ENCODE measurements at regions of chr13 and their contacts with region 1.

Region 1: GRCh38 chr13:49443704-49444523 is at the starts of genes CAB39L and SETDB2:
- DNase-seq: peak; percentile 99 to 100
- H3K4me3 ChIP-seq: peak within 1 kb of the TSS; percentile 80
- CTCF ChIP-seq: no peak
- POLR2A ChIP-seq: no peak
- total RNA-seq, gene CAB39L: 14.9 to 31.1 (median 26.3) TPM
- total RNA-seq, gene SETDB2: 9.3 to 14.4 (median 9.9) TPM

Region 2: DNA sequence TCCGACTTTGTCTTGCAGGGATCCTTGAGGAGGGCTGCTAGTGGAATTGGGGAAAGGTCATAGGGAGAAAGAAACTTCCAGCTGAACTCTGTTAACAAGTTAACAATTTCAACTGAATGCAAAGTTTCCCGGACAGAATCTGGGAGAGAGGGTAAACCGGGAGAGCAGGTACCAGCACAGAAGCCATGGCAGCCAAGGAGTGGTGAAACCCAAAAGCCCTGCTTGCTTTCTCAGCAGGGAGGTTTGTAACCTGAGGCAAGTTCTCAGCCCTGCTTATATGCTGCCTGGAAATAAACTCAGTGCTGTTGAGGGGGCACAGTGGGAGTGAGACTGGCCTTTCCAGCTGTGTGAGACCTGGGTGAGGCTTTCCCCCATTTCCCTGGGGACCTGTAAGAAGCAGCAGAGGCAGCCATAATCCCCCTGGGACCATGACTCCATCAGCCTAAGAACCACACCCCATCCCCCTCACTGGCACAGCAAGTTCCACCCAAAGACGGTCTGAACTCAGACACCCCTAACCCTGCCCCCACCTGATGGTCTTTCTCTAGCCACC is 1526.8 kb before region 1 on chr13:
- intact Hi-C with region 1: no loop called
- DNase-seq: no peak
- H3K4me3 ChIP-seq: no peak overlapping the region
- CTCF ChIP-seq: no peak
- POLR2A ChIP-seq: no peak

Region 3: DNA sequence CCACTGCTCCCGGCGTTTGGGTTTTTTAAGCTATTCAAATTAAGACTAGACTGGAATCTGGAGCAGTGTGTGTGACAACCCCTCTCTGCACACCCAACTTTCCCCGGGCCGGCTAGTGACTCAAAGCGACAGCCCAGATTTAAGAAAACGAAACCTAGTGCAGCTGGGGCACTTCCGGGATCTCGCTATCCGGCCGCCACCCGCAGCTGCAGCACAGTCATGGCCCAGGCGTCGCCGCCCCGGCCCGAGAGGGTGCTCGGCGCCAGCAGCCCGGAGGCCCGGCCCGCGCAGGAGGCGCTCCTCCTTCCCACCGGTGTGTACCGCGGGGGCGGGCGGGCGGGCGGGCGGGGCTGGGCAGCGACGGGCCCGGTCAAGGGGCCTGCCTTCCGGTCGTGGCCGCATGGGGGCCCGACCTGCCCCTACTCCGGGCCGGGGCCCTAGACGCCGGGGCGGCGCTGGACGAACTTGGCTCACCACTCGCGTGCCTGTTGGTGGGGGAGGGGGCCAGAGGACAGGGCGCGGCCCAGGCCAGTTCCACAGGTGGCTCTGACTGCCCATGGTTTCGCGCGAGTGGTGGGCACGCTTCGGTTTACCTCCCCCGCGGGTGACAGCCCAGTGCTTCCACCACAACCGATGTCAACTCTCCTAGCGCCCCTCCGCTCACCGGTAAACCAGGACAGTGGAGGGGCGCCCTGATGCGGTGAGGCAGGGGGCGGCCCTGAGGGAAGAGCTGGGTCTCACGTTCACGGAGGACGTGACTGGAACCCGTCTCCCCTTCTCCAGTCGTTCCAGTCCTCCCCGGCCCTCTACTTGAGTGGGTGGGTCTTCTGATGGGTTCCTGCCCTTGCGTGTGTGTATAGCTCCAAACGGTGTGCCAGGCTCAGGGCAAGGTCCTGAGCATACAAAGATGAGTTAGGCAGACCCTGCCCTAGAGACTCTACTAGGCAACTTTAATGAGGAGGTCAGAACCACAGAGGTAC is 52.2 kb after region 1 on chr13 and contains the start of gene PHF11:
- intact Hi-C with region 1: loop called (anchors 10 kb)
- DNase-seq: peak; percentile 81 to 96
- H3K4me3 ChIP-seq: peak within 1 kb of the TSS; percentile 51
- CTCF ChIP-seq: no peak
- POLR2A ChIP-seq: no peak
- total RNA-seq, gene PHF11: 21.2 to 49.4 (median 32.0) TPM

Region 4: GRCh38 chr13:49606747-49607648 is 163.1 kb after region 1 on chr13:
- intact Hi-C with region 1: loop called (anchors 2 kb)
- DNase-seq: peak; percentile 87 to 98
- H3K4me3 ChIP-seq: no peak overlapping the region
- CTCF ChIP-seq: peak in 1 of 3 donors; percentile 77
- POLR2A ChIP-seq: no peak

Measured in lower leg skin (tissue), 4 donors.